ENCODE measurements at regions of chr7 and their contacts with region 1.

Region 1: GRCh38 chr7:129530795-129531391 is 28.6 kb downstream of the SMKR1 start:
- DNase-seq: peak; percentile 61
- H3K4me3 Mint-ChIP-seq: no peak overlapping the region
- H3K27ac Mint-ChIP-seq: peak overlapping the region; percentile 76
- H3K4me1 Mint-ChIP-seq: peaks cover 11% of the 10 kb centered on the region
- H3K27me3 Mint-ChIP-seq: peaks cover 5% of the 10 kb centered on the region

Region 2: DNA sequence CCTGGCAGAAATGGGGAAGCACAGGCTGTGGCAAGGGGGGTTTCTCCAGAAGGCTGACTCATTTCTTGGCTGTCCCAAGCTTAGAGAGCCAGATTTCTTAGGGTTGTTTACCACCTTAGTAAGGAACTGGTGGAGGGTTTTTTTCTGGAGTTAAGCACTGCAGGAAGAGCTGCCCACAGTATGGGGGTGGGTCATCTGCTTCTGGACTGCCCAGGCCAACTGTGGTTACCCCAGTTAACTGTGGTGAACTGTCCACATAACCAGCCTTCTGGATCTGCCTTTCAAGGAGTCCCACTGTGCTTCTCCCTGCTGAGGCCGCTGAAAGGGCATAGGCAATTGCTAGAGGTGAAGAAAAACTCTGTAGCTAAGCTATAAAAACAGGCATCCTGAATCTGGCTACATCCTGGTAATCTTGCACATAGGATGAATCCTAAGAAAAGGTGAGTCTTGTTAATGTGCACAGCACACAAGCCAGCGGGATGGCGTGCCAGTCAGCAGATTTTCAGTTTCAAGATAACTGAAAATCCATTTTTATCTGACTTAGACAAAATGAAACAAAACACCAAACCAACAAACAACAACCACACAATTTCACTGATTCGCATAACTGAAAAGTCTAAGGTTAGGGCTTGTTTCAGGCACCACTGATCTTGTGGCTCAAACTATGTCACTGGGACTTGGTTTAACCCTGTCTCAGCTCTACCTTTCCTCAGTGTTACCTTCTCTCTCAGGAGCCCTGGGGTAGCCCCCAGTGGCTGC is 408.0 kb before region 1 on chr7:
- intact Hi-C with region 1: loop called (anchors 2 kb)
- DNase-seq: peak; percentile 71
- H3K4me3 Mint-ChIP-seq: peak overlapping the region; percentile 58
- H3K27ac Mint-ChIP-seq: peak overlapping the region; percentile 91
- H3K4me1 Mint-ChIP-seq: peaks cover 25% of the 10 kb centered on the region
- H3K27me3 Mint-ChIP-seq: peaks cover 11% of the 10 kb centered on the region

Region 3: GRCh38 chr7:129494041-129494440 is 36.9 kb before region 1 on chr7:
- intact Hi-C with region 1: loop called (anchors 1 kb)
- DNase-seq: peak; percentile 78
- H3K4me3 Mint-ChIP-seq: no peak overlapping the region
- H3K27ac Mint-ChIP-seq: peak overlapping the region; percentile 83
- H3K4me1 Mint-ChIP-seq: peaks cover 29% of the 10 kb centered on the region
- H3K27me3 Mint-ChIP-seq: no peaks in the 10 kb centered on the region

Region 4: DNA sequence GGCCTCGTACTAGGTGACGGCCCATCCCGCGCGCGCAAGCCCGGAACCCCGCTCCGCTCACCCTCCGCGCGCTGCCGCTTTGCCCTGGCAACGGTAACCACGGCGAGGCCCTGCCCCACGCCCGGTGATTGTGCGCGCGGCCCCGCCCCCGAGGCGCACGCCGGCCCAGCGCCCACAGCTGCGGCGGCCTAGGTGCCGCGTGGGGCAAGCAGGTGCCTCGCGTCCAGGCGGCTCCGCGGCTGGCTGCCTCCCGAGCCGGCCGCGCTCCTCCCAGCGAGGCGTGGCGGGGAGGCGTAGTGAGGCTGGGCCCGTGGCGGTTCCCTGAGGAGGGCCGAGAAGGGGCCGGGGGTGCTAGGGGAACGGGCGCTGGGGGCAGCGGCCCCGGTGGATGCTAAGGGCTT is 28.5 kb before region 1 on chr7 and contains the start of gene SMKR1:
- intact Hi-C with region 1: loop called (anchors 2 kb)
- DNase-seq: peak; percentile 98
- H3K4me3 Mint-ChIP-seq: peak within 1 kb of the TSS; percentile 84
- H3K27ac Mint-ChIP-seq: peak within 1 kb of the TSS; percentile 84
- H3K4me1 Mint-ChIP-seq: peaks cover 22% of the 10 kb centered on the region
- H3K27me3 Mint-ChIP-seq: peaks cover 9% of the 10 kb centered on the region
- total RNA-seq, gene SMKR1: 5.9 and 6.1 TPM in 2 replicates

Region 5: DNA sequence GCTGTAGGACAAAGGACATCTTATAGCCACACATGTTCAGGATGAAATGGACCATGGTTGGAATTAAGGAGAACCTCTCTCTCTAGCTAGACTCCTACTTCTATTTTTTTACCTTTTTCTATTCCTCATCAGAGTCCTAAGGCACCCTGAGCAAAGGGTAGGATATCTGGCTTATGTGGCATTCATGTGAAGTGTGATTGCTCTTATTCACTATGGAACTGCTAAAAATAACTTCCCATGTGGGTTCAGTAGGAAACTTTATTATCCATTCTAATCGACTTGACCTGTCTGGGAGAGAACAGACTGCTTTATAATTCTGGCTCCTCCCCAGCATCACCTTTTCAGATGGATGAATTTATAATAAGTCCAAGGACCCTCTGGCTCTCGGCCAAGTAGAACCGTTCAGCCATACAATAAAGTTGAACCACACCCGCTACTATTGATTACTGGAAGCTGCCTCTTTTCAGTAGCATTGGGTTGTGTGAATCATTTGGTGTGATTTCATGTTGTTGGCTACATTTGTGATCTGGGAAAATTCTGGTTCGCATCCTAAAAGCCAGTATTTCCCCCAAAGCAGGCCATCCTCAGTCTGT is 198.1 kb after region 1 on chr7:
- intact Hi-C with region 1: no loop called
- DNase-seq: no peak
- H3K4me3 Mint-ChIP-seq: no peak overlapping the region
- H3K27ac Mint-ChIP-seq: no peak overlapping the region
- H3K4me1 Mint-ChIP-seq: no peaks in the 10 kb centered on the region
- H3K27me3 Mint-ChIP-seq: no peaks in the 10 kb centered on the region